Activated T-helper 2 cell treated with anti-CD3 and anti-CD28 coated beads, Interferon-gamma antibody, Interleukin-2, Interleukin-4, amounts not matched to agents 10 μg/mL and 5 μg/mL and 100 μg/mL, durations not matched to agents 14 hours and 24 hours and 36 hours (primary cell): ENCODE measurements at regions of chr2 and their contacts with region 1.

Region 1: DNA sequence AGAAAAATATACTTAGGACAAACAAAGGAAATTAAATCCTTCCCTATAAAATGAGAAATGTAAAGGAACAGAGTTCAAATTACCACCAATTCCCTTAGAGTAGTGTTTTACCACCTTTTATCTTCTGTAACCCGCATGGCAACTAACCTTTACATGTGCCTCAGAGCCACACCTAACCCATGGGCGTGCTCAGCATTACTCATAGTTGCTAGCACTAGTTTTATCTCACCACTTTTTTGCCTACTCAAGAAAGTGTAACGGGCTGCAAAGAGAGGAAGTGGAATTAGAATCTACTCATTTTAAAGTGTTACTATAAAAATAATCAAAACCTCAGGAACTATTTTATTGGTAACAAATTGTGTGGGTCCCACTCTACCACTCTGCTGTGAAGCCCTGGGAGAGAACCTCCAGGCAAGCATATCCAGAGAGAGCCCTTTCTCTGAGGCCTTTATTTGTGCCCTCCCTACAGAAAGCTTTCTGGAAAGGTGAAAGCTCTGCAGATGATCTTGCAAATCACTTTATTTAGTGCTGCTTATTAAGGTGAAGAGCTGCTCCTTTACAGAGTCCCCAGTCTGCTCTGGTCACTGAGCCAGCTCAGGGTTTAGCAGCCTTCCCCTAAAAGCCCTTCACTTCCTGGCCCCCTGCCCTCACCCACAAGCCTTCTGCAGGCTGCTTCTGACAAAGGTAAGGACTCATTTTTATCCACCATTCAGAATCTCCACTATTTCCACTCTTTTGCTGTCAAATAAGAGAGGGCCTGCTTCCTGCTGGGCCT is 98.8 kb downstream of the TRABD2A start:
- DNase-seq: peak; percentile 57
- H3K4me3 Mint-ChIP-seq: no peak overlapping the region
- H3K27ac Mint-ChIP-seq: peak overlapping the region; percentile 87
- H3K4me1 Mint-ChIP-seq: peaks cover 66% of the 10 kb centered on the region
- H3K27me3 Mint-ChIP-seq: no peaks in the 10 kb centered on the region

Region 2: DNA sequence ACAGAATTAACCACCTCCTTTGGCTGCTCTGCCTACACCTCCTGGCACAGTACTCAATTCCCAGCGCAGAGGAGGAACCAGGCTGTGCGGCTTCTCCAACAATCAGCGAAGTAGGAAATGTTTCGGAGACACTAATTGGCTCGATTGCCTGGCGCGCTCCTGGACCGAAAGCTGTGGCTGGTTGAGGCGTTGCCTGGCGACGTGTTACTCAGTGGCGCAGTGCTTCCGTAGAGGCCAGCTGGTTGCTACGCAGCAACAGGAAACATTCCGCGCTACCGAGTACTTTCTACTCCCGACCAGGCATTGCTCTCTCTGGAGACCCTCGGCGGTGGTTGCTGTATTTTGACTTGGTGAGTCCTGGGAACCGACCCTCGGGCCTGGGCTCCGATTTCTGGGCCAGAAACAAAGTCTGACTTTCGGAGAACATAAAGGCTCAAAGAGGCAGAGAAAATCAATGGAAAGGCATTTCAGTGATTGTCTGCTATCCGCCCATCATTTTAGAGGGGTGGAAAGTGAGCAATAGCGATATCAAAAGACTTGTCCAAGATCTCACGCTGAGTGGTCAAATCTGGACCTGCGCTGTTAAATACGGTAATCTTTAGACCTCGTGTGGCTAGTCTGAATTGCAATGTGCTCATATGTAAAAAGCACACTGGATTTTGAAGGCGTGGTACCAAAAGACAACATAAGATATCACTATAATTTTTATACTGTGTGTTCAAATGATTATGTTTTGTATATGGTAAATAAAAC is 265.7 kb before region 1 on chr2 and contains the start of gene DNAH6:
- intact Hi-C with region 1: no loop called
- DNase-seq: peak; percentile 82
- H3K4me3 Mint-ChIP-seq: peak within 1 kb of the TSS; percentile 79
- H3K27ac Mint-ChIP-seq: no peak within 1 kb of the TSS
- H3K4me1 Mint-ChIP-seq: peaks cover 15% of the 10 kb centered on the region
- H3K27me3 Mint-ChIP-seq: peaks cover 21% of the 10 kb centered on the region
- total RNA-seq, gene DNAH6: 0.09 and 0.14 TPM in 2 replicates

Region 3: DNA sequence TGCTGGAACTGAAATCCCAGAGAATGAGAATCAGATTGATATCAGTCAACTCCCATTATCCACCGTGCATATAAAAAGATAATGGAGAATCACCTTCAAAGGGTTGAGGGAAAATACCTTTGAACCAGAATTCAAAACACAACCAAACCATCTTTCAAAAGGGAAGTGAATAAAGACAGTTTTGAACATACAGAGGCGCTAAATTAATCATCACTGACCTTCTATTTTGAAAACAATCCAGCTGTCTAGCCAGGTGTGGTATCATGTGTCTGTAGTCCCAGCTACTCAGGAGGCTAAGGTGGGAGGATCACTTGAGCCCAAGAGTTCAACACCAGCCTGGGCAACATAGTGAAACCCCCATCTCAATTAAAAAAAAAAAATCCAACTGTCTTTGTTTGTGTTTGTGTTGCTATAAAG is 35.1 kb after region 1 on chr2:
- intact Hi-C with region 1: loop called (anchors 1 kb)
- DNase-seq: no peak
- H3K4me3 Mint-ChIP-seq: no peak overlapping the region
- H3K27ac Mint-ChIP-seq: peak overlapping the region; percentile 31
- H3K4me1 Mint-ChIP-seq: peaks cover 29% of the 10 kb centered on the region
- H3K27me3 Mint-ChIP-seq: no peaks in the 10 kb centered on the region

Region 4: DNA sequence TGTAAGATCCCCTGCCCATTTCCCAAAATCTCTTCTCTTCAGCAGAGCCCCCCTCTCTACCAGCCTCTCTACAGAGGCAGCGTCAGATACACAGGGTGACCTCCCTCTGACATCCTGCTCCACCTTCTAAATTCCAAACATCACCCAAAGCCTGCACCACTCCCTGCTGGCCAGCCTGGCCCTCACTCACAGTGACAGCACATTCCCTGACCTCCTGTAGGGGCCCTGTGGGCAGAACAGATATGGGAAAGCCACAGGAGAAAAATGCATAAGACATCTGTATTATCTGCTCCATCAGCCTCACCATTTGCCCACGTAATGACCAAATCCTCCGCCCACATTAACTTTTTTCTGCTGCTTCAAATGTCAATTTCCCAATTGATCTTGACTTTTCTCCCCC is 58.2 kb after region 1 on chr2:
- intact Hi-C with region 1: no loop called
- DNase-seq: no peak
- H3K4me3 Mint-ChIP-seq: peak overlapping the region; percentile 59
- H3K27ac Mint-ChIP-seq: peak overlapping the region; percentile 21
- H3K4me1 Mint-ChIP-seq: peaks cover 50% of the 10 kb centered on the region
- H3K27me3 Mint-ChIP-seq: no peaks in the 10 kb centered on the region

Region 5: GRCh38 chr2:86352137-86352726 is 1570.1 kb after region 1 on chr2:
- intact Hi-C with region 1: no loop called
- DNase-seq: no peak
- H3K4me3 Mint-ChIP-seq: no peak overlapping the region
- H3K27ac Mint-ChIP-seq: no peak overlapping the region
- H3K4me1 Mint-ChIP-seq: no peaks in the 10 kb centered on the region
- H3K27me3 Mint-ChIP-seq: peaks cover 11% of the 10 kb centered on the region